Right ventricle myocardium superior (tissue), 1 donor: ENCODE measurements at regions of chr10 and their contacts with region 1.

Region 1: GRCh38 chr10:13712837-13713581 is 126.2 kb downstream of the PRPF18 start:
- DNase-seq: peak; percentile 86
- ATAC-seq: peak; percentile 72

Region 2: GRCh38 chr10:13673156-13673555 is 39.9 kb before region 1 on chr10:
- intact Hi-C with region 1: loop called (anchors 5 kb)
- DNase-seq: no peak
- ATAC-seq: no peak